ENCODE measurements at regions of chr4 and their contacts with region 1.

Region 1: GRCh38 chr4:18593445-18594002 is 572.0 kb upstream of the LCORL start:
- DNase-seq: peak in 4 of 5 donors; percentile 25 to 53 (median 28)
- H3K4me3 ChIP-seq: no peak overlapping the region
- H3K27ac ChIP-seq: no peak overlapping the region
- H3K4me1 ChIP-seq: no peaks in the 10 kb centered on the region
- H3K27me3 ChIP-seq: no peaks in the 10 kb centered on the region
- CTCF ChIP-seq: peak; percentile 30 to 54 (median 38)
- EP300 ChIP-seq: no peak
- POLR2A ChIP-seq: no peak

Region 2: DNA sequence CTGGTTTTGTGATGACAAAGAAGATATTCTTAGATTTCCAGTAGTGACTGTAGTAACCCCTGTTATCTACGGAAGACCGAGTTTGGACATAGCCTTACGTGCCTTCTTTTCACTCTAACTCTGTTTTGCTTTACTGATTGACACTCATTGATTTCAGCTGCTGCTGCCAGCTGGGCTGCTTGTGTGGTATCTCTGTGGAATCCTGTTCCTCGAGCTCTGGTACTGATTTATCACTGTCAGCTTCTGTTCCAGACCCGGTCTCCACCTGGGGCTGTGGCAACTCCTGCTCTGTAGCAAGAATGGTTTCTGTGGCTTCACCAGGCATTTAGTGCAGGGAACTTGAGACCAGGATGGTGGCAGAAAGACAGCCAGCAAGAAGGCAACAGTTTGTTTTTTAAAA is 1041.1 kb before region 1 on chr4:
- intact Hi-C with region 1: loop called in 3 of 4 experiments (anchors 10 kb)
- DNase-seq: no peak
- H3K4me3 ChIP-seq: no peak overlapping the region
- H3K27ac ChIP-seq: no peak overlapping the region
- H3K4me1 ChIP-seq: no peaks in the 10 kb centered on the region
- H3K27me3 ChIP-seq: no peaks in the 10 kb centered on the region
- CTCF ChIP-seq: no peak
- EP300 ChIP-seq: no peak
- POLR2A ChIP-seq: no peak